ENCODE measurements at regions of chr17 and their contacts with region 1.

Region 1: GRCh38 chr17:58006924-58007780 is at the start of gene SRSF1:
- DNase-seq: peak; percentile 81 to 98
- H3K4me3 ChIP-seq: peak within 1 kb of the TSS; percentile 84 to 85
- H3K27ac ChIP-seq: peak within 1 kb of the TSS; percentile 96 to 99
- H3K4me1 ChIP-seq: peaks cover 4 to 33% of the 10 kb centered on the region in 2 donors
- H3K27me3 ChIP-seq: no peaks in the 10 kb centered on the region
- CTCF ChIP-seq: no peak
- total RNA-seq, gene SRSF1: 89.4 TPM

Region 2: DNA sequence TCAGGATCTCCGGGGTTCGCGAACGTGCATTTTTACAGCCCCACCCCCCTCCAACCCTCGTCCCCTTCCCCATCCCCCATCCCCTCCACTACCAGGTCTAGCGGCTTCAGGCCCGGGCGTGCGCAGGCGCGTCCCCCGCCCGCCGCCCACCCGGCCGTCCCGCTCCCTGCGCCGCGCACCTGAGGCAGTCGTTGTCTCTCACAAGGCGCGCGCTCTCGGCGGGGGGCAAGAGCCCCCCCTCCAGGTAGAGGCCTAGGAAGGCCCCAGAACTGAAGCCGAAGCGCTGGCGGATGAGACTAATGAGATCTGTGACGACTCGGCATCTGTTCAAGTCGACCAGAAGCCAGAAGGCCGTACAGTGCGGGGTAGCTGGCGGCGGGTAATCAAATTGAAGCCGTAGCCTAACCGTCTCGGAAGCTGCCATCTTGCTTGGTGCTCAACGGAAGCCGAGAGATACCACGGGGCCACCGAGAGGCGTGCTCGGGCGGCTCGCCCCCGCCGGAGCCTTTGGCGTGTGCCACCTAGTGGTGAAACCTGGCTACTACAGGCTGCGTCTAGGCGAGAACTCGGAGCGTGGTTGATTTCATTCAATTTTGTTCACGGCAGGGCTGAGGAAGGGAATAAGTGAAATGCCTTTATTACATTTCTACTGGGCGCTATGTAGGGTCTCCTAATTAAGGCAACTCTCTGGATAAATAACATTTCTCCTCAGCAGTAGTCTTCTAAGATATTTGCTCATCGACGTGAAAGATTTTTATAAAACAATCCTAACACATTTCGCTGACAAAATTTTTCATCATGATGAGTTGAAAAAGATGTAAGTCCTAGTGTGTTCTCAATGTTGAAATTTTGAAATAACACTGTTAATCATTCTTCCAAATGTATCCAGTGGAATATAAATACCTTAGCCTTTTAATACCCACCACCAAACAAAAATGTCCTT is 1046.3 kb before region 1 on chr17 and contains the start of gene COIL:
- intact Hi-C with region 1: loop called (anchors 5 kb)
- DNase-seq: peak; percentile 39 to 95
- H3K4me3 ChIP-seq: peak within 1 kb of the TSS; percentile 84 to 89
- H3K27ac ChIP-seq: peak within 1 kb of the TSS; percentile 84 to 89
- H3K4me1 ChIP-seq: peaks cover 7 to 14% of the 10 kb centered on the region in 2 donors
- H3K27me3 ChIP-seq: no peaks in the 10 kb centered on the region
- CTCF ChIP-seq: peak; percentile 94 to 100 (median 98)
- total RNA-seq, gene COIL: 4.8 TPM

Region 3: DNA sequence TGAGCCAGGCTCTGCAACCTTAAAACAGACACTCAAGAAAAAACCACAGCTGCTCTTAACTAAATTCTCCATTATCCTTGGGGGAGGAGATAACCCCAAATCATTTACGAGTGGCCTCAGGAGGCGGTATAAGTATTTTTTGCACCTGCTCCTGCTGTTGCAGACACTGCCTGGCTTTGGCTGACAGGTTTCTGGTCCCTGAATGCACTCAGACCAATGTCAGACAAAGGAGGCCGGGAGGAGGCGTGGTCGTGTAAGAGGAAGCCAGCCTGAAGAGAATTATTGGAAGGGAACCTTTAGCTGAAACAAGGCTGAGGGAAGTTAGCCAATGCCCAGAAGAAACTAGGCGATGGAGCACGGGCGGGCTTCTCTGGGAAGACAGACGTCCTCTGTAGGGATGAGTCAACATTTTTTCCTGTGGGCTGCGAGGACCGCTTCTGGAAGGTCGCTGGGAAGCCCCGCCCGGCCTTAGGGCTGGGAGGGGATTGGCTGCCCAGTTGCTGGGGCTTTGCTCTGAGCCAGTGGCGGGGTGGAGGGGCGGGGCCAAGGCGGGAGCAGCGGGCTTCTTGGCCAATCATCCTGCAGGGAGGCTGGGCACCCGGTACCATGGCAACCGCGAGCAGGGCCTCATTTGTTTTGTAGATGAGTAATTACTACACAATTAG is 344.4 kb before region 1 on chr17:
- intact Hi-C with region 1: loop called (anchors 5 kb)
- DNase-seq: peak; percentile 90 to 98
- H3K4me3 ChIP-seq: peak overlapping the region; percentile 44 to 50
- H3K27ac ChIP-seq: peak overlapping the region; percentile 68 to 73
- H3K4me1 ChIP-seq: peaks cover 0 to 7% of the 10 kb centered on the region in 2 donors
- H3K27me3 ChIP-seq: no peaks in the 10 kb centered on the region
- CTCF ChIP-seq: peak in 1 of 3 experiments; percentile 11

Region 4: GRCh38 chr17:58028578-58028977 is 21.4 kb after region 1 on chr17:
- intact Hi-C with region 1: no loop called
- DNase-seq: no peak
- H3K4me3 ChIP-seq: no peak overlapping the region
- H3K27ac ChIP-seq: no peak overlapping the region
- H3K4me1 ChIP-seq: no peaks in the 10 kb centered on the region
- H3K27me3 ChIP-seq: no peaks in the 10 kb centered on the region
- CTCF ChIP-seq: no peak

Region 5: DNA sequence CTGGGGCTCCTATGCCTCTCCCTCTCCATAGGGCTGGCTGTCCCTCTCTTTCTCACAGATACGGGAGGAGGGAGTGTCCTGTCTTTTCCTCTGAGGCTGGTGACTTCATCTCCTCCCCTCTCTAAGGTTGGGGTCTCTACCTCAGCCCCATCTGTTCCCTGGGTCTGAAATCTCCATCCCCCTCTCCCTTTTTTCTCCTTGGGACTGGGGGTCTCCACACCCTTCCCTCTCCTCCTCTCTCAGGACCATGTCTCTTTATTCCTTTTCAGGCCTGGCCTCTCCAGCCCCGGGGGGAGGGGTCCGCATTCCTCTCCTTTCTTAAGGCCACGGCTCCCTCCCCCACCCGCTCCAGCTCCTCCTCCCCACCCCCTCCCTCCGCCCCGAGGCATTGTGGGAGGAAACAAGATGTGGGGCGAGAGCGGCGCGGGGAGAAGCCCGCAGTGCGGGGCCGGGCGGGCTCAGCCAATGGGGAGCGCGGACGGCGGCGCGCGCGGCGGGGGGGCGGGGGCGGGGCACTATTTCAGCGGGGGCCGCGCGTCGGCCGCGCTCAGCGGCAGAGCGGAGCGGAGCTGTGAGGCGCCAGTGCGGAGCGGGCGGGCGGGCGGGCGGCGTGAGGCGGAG is 75.8 kb after region 1 on chr17 and contains the start of gene DYNLL2:
- intact Hi-C with region 1: loop called (anchors 1 kb)
- DNase-seq: peak; percentile 65 to 96
- H3K4me3 ChIP-seq: peak within 1 kb of the TSS; percentile 66 to 76
- H3K27ac ChIP-seq: peak within 1 kb of the TSS; percentile 90 to 92
- H3K4me1 ChIP-seq: peaks cover 6 to 27% of the 10 kb centered on the region in 2 donors
- H3K27me3 ChIP-seq: no peaks in the 10 kb centered on the region
- CTCF ChIP-seq: no peak
- total RNA-seq, gene DYNLL2: 15.3 TPM

Region 6: DNA sequence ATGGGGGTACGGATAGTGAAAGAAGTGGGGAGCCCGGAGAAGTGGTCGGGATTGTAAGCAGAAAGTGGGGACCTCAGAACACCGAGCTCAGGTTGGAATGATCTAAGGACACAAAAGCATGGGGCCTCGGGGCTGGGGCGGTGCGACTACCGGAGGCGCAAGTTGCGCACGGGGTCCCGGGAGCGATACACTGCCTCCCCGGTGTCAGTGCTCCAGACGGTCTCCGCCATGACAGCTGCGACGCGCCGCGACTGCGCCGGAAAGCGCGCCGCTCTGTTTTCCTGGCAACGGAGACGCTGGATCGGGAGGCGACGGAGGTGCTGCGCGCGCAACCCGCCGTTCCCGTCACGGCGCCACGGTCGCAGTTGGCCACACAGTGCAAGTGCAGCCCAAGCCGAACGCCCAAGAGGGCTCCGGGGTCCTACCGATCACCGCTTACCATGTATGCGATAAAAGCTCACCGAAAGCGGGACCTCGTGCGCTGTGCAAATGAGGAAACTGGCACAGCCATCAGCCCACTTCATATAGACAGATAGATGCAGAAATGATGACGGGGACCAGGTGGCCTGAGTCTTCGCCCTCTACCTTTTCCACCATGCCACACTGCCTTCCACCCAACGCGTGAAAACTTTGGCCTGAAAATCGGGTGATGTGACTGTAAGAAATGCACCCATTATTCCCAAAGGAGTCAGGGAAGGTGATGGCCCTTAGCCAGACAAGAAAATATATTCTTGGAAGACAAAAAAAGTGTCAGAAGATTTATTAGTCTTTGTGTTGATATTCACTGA is 212.0 kb after region 1 on chr17 and contains the start of gene MKS1:
- intact Hi-C with region 1: loop called (anchors 5 kb)
- DNase-seq: peak; percentile 70 to 97
- H3K4me3 ChIP-seq: peak within 1 kb of the TSS; percentile 58 to 65
- H3K27ac ChIP-seq: peak within 1 kb of the TSS; percentile 56 to 67
- H3K4me1 ChIP-seq: no peaks in the 10 kb centered on the region
- H3K27me3 ChIP-seq: no peaks in the 10 kb centered on the region
- CTCF ChIP-seq: peak; percentile 56 to 79 (median 75)
- total RNA-seq, gene MKS1: 1.5 TPM